Activated CD4-positive, alpha-beta T cell treated with anti-CD3 and anti-CD28 coated beads, Interleukin-2, amount 10 ng/mL, durations not matched to agents 24 days and 14 days (primary cell): ENCODE measurements at regions of chr19 and their contacts with region 1.

Region 1: GRCh38 chr19:42132851-42133528 is 744 bp upstream of the POU2F2 start:
- DNase-seq: peak; percentile 97
- H3K4me3 Mint-ChIP-seq: peak overlapping the region; percentile 88
- H3K27ac Mint-ChIP-seq: peak overlapping the region; percentile 81
- H3K4me1 Mint-ChIP-seq: peaks cover 59% of the 10 kb centered on the region
- H3K27me3 Mint-ChIP-seq: no peaks in the 10 kb centered on the region

Region 2: GRCh38 chr19:41959056-41960053 is 173.6 kb before region 1 on chr19 and contains the start of gene RABAC1:
- intact Hi-C with region 1: no loop called
- DNase-seq: peak; percentile 97
- H3K4me3 Mint-ChIP-seq: peak within 1 kb of the TSS; percentile 89
- H3K27ac Mint-ChIP-seq: peak within 1 kb of the TSS; percentile 92
- H3K4me1 Mint-ChIP-seq: peaks cover 14% of the 10 kb centered on the region
- H3K27me3 Mint-ChIP-seq: no peaks in the 10 kb centered on the region
- total RNA-seq, gene RABAC1: 37.2 and 41.5 TPM in 2 replicates

Region 3: GRCh38 chr19:42121656-42122069 is 11.3 kb before region 1 on chr19:
- intact Hi-C with region 1: loop called (anchors 1 kb)
- DNase-seq: peak; percentile 92
- H3K4me3 Mint-ChIP-seq: peak overlapping the region; percentile 80
- H3K27ac Mint-ChIP-seq: peak overlapping the region; percentile 95
- H3K4me1 Mint-ChIP-seq: peaks cover 52% of the 10 kb centered on the region
- H3K27me3 Mint-ChIP-seq: no peaks in the 10 kb centered on the region

Region 4: GRCh38 chr19:42184401-42184861 is 51.4 kb after region 1 on chr19:
- intact Hi-C with region 1: loop called (anchors 1 kb)
- DNase-seq: peak; percentile 91
- H3K4me3 Mint-ChIP-seq: peak overlapping the region; percentile 21
- H3K27ac Mint-ChIP-seq: peak overlapping the region; percentile 64
- H3K4me1 Mint-ChIP-seq: peaks cover 42% of the 10 kb centered on the region
- H3K27me3 Mint-ChIP-seq: peaks cover 14% of the 10 kb centered on the region

Region 5: DNA sequence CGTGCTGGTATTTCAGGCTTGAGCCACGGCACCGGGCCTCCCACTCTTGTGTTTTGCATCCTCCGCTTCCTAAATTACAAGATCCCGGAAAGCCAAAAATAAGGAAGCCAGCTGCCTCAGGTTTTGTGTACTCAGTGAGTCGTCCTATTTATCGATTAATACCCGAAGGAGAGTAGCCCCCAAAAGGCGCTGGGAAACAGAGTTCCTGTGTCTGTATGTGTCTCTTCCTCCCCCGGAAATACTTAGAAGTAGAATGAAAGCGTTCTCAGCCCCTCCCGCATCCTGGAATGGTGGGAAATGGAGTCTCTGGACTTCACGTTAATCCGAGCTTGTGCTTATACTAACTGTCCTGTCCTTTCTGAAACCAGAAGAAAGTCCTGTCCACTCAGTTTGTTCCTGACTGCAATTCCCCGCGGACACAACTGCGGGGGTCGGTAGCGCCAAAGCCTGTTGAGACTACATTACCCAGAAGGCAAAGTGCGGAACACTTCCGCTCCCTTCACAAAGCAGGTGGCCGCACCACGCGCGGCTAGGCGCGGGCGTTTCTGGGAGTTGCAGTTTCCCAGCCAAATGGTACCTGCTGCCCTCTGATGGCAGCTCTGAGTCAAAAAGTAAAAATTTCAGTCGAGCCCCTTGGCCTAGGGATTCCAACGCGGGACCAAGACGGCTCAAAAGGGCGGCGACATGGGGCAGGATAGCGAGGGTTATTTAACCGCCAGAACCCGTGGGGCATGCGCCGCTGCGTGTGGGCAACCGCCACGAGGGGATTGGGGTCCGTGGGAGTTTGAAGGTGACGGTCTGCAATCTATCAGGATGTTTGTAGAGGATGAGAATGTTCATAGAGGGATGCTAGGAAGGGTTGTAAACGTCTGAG is 111.6 kb after region 1 on chr19:
- intact Hi-C with region 1: loop called (anchors 2 kb)
- DNase-seq: peak; percentile 97
- H3K4me3 Mint-ChIP-seq: peak overlapping the region; percentile 90
- H3K27ac Mint-ChIP-seq: peak overlapping the region; percentile 93
- H3K4me1 Mint-ChIP-seq: peaks cover 31% of the 10 kb centered on the region
- H3K27me3 Mint-ChIP-seq: no peaks in the 10 kb centered on the region

Region 6: GRCh38 chr19:42301656-42302203 is 168.7 kb after region 1 on chr19 and contains the start of gene PRR19:
- intact Hi-C with region 1: loop called (anchors 5 kb)
- DNase-seq: no peak
- H3K4me3 Mint-ChIP-seq: peak within 1 kb of the TSS; percentile 92
- H3K27ac Mint-ChIP-seq: peak within 1 kb of the TSS; percentile 90
- H3K4me1 Mint-ChIP-seq: peaks cover 21% of the 10 kb centered on the region
- H3K27me3 Mint-ChIP-seq: no peaks in the 10 kb centered on the region
- total RNA-seq, gene PRR19: 1.3 and 1.6 TPM in 2 replicates

Region 7: GRCh38 chr19:42423462-42424344 is 290.7 kb after region 1 on chr19:
- intact Hi-C with region 1: loop called (anchors 10 kb)
- DNase-seq: peak; percentile 98
- H3K4me3 Mint-ChIP-seq: peak overlapping the region; percentile 91
- H3K27ac Mint-ChIP-seq: peak overlapping the region; percentile 91
- H3K4me1 Mint-ChIP-seq: peaks cover 36% of the 10 kb centered on the region
- H3K27me3 Mint-ChIP-seq: no peaks in the 10 kb centered on the region